ENCODE measurements at regions of chr7 and their contacts with region 1.

Region 1: DNA sequence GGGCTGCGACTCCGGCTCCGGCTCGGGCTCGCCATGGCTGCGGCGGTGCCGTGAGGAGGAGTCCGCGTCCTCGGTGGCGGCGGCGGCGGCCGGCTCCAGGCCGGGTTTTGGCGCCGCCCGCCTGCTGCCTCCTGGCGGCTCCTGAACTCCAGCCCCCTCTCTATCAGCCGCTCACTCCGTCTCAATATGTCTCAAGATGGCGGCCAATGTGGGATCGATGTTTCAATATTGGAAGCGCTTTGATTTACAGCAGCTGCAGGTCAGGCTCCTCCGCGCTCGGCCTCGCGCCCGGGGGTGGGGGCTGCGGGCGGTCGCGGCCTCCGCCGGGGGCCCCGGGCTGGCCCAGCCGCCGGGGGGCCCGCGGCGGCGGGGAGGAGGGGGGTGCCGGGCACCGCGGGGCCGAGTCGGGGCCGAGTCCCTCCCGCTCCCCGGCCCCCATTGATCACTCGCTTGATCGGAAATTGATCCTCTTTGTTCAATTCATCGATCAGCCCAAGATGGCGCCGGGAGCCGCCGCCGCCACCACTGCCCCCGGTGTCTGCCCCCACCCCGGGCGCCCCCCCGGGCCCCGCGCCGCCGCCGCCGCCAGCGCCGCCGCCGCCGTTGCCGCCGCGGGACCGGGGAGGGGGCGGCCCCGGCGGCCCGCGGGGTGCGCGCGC is 1.5 kb upstream of the CUX1 start:
- DNase-seq: no peak
- H3K4me3 ChIP-seq: peak overlapping the region; percentile 92 to 94 (median 92)
- H3K27ac ChIP-seq: peak overlapping the region; percentile 81 to 87 (median 82)
- H3K4me1 ChIP-seq: peaks cover 24 to 53% (median 42%) of the 10 kb centered on the region in 4 donors
- H3K27me3 ChIP-seq: no peaks in the 10 kb centered on the region
- CTCF ChIP-seq: peak in 2 of 3 experiments; percentile 2 to 27
- EP300 ChIP-seq: no peak
- POLR2A ChIP-seq: no peak

Region 2: GRCh38 chr7:100991631-100992030 is 824.3 kb before region 1 on chr7:
- intact Hi-C with region 1: no loop called
- DNase-seq: no peak
- H3K4me3 ChIP-seq: no peak overlapping the region
- H3K27ac ChIP-seq: no peak overlapping the region
- H3K4me1 ChIP-seq: no peaks in the 10 kb centered on the region
- H3K27me3 ChIP-seq: no peaks in the 10 kb centered on the region
- CTCF ChIP-seq: no peak
- EP300 ChIP-seq: no peak
- POLR2A ChIP-seq: no peak

Region 3: DNA sequence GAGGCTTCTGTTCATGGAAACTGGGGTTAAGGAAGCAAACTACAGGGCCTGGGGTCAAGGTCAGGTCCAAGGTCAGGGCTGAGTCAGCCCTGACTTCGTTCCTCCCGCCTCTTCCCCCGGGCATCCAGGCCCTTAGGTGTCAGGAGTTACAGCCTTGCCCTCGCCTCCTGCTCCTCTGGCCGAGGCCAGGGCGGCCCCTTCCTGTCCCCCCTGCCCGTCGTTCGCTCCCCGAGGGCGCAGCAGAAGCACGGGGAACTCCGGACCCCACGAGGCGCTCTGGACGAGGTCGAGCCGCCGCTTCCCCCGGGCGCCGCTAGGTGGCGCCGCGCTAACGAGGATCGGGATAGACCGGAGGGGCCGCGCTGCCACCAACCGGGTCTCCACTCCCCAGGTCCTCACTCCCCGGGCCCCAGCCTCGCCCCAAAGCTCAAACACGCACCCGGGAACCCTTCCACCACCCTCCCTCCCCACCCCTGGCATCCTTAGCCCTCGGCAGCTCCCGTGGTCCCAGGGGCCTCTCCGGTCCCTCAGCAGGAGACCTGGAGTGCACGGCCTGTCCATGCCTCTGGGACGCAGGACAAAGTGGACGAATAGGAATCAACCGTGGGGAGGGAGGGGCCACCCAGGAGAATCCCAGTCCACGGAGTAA is 127.7 kb before region 1 on chr7:
- intact Hi-C with region 1: loop called (anchors 2 kb)
- DNase-seq: peak; percentile 94
- H3K4me3 ChIP-seq: peak overlapping the region; percentile 30 to 48 (median 38)
- H3K27ac ChIP-seq: peak overlapping the region in 1 of 4 donors; percentile 24
- H3K4me1 ChIP-seq: peaks cover 10 to 14% (median 13%) of the 10 kb centered on the region in 4 donors
- H3K27me3 ChIP-seq: peaks cover 0 to 11% (median 0%) of the 10 kb centered on the region in 4 donors
- CTCF ChIP-seq: peak; percentile 90 to 99 (median 95)
- EP300 ChIP-seq: no peak
- POLR2A ChIP-seq: no peak

Region 4: GRCh38 chr7:101856473-101857357 is 40.8 kb after region 1 on chr7:
- intact Hi-C with region 1: loop called (anchors 5 kb)
- DNase-seq: peak; percentile 97
- H3K4me3 ChIP-seq: peak overlapping the region; percentile 40 to 48 (median 44)
- H3K27ac ChIP-seq: peak overlapping the region; percentile 80 to 87 (median 84)
- H3K4me1 ChIP-seq: peaks cover 54 to 81% (median 71%) of the 10 kb centered on the region in 4 donors
- H3K27me3 ChIP-seq: no peaks in the 10 kb centered on the region
- CTCF ChIP-seq: peak; percentile 13 to 52 (median 37)
- EP300 ChIP-seq: no peak
- POLR2A ChIP-seq: no peak

Region 5: GRCh38 chr7:101953248-101953819 is 137.4 kb after region 1 on chr7:
- intact Hi-C with region 1: loop called (anchors 5 kb)
- DNase-seq: no peak
- H3K4me3 ChIP-seq: peak overlapping the region in 2 of 4 donors; percentile 5 to 15
- H3K27ac ChIP-seq: peak overlapping the region; percentile 82 to 92 (median 86)
- H3K4me1 ChIP-seq: peaks cover 57 to 86% (median 76%) of the 10 kb centered on the region in 4 donors
- H3K27me3 ChIP-seq: no peaks in the 10 kb centered on the region
- CTCF ChIP-seq: peak in 2 of 3 experiments; percentile 14 to 20
- EP300 ChIP-seq: peak; percentile 43
- POLR2A ChIP-seq: no peak

Region 6: GRCh38 chr7:102193806-102194205 is 377.8 kb after region 1 on chr7:
- intact Hi-C with region 1: no loop called
- DNase-seq: no peak
- H3K4me3 ChIP-seq: no peak overlapping the region
- H3K27ac ChIP-seq: no peak overlapping the region
- H3K4me1 ChIP-seq: peaks cover 0 to 5% (median 0%) of the 10 kb centered on the region in 4 donors
- H3K27me3 ChIP-seq: no peaks in the 10 kb centered on the region
- CTCF ChIP-seq: no peak
- EP300 ChIP-seq: no peak
- POLR2A ChIP-seq: no peak

Region 7: GRCh38 chr7:102236592-102237287 is 420.8 kb after region 1 on chr7:
- intact Hi-C with region 1: loop called (anchors 10 kb)
- DNase-seq: no peak
- H3K4me3 ChIP-seq: no peak overlapping the region
- H3K27ac ChIP-seq: no peak overlapping the region
- H3K4me1 ChIP-seq: peaks cover 0 to 10% (median 0%) of the 10 kb centered on the region in 4 donors
- H3K27me3 ChIP-seq: no peaks in the 10 kb centered on the region
- CTCF ChIP-seq: peak; percentile 67 to 82 (median 71)
- EP300 ChIP-seq: no peak
- POLR2A ChIP-seq: no peak